HEK293 (cell line): ENCODE measurements at regions of chr12 and their contacts with region 1.

Region 1: GRCh38 chr12:42129595-42130204 is 15.0 kb downstream of the GXYLT1 start:
- H3K4me3 ChIP-seq: no peak overlapping the region
- H3K27ac ChIP-seq: no peak overlapping the region
- H3K4me1 ChIP-seq: peaks cover 14% of the 10 kb centered on the region
- CTCF ChIP-seq: peak; percentile 53; the same call in 1 of the 2 replicates

Region 2: DNA sequence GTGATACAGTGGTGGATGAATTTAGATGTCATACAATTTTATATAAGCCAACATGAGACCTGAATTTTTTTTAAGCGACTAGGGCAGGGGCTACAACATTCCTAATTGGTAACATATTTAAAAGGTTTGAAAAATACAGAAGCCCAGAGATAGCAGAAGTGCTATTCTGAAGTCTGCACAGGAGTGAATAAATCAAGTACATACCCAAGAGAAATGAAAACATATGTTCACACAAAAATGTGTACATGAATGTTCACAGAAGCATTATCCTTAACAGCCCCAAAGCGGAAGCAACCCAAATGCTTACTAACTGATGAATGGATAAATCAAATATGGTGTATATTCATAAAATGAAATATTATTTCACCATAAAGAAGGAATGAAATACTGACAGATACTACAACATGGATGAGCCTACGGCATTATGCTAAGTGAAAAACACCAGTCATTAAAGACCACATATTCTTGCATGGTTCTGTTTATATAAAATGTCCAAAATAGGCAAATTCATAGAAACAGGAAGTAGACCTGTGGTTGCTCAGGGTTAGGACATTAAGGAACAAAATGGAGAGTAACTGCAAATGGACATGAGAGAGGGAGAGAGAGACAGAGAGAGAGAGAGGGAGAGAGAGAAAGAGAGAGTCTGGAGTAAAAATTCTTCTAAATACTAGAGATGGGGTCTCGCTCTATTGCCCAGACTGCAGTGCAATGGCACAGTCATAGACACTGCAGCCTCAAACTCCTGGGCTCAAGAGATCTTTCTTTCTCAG is 42.9 kb after region 1 on chr12:
- CTCF ChIA-PET with region 1: no interaction called
- POLR2A ChIA-PET with region 1: no interaction called
- H3K4me3 ChIP-seq: no peak overlapping the region
- H3K27ac ChIP-seq: no peak overlapping the region
- H3K4me1 ChIP-seq: no peaks in the 10 kb centered on the region
- CTCF ChIP-seq: no peak

Region 3: GRCh38 chr12:42332301-42333285 is 202.9 kb after region 1 on chr12:
- CTCF ChIA-PET with region 1: interaction called, 15 read pairs
- POLR2A ChIA-PET with region 1: no interaction called
- H3K4me3 ChIP-seq: no peak overlapping the region
- H3K27ac ChIP-seq: no peak overlapping the region
- H3K4me1 ChIP-seq: peaks cover under 1% of the 10 kb centered on the region
- CTCF ChIP-seq: no peak